HEK293 (cell line): ENCODE measurements at regions of chr11 and their contacts with region 1.

Region 1: GRCh38 chr11:76919887-76920746 is 59.4 kb downstream of the ACER3 start:
- H3K4me3 ChIP-seq: no peak overlapping the region
- H3K27ac ChIP-seq: no peak overlapping the region
- H3K4me1 ChIP-seq: no peaks in the 10 kb centered on the region
- CTCF ChIP-seq: peak; percentile 70

Region 2: DNA sequence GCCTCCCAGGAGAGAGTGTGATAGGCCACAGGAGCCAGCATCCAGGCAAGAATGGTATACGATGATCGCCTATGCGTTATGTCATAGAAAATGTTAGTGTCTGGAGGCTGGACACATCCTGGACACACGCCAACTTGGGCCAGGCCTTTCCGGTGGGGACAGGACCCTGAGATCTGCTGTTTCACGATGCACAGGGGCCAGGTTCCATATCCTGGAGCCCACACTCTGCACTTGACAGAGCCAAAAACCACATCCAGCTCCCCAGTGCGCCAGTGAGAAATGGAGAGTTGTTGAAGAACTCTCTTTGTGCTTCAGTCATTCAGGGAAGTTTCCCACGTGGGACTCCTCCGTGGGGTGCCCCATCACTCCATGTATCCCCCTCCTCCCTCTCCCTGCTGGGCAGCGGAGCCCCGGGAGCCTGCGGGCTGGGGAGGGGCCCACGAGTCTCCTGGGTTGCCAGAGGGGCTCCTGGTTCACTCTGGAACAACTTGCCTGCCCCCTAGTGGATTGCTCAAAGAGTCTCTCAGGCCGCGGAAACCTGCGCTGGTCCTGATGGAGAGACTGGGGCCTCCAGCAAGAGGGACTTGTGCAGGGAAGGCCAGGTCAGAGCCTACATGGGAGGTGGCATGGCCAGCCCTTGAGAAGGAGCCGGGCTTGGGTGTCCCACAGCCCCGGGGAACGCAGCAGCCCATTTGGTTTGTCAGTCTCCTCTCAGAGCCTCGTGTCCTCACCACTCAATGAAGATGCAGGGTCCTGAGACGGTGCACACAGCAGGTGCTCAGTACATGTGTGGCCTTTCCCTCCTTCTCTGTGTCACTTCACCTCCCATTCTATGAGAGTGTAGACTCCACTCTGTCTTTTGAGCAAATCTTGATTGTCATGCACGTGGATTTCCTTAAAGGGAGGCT is 239.3 kb before region 1 on chr11:
- CTCF ChIA-PET with region 1: no interaction called
- POLR2A ChIA-PET with region 1: no interaction called
- H3K4me3 ChIP-seq: no peak overlapping the region
- H3K27ac ChIP-seq: no peak overlapping the region
- H3K4me1 ChIP-seq: no peaks in the 10 kb centered on the region
- CTCF ChIP-seq: peak; percentile 59

Region 3: DNA sequence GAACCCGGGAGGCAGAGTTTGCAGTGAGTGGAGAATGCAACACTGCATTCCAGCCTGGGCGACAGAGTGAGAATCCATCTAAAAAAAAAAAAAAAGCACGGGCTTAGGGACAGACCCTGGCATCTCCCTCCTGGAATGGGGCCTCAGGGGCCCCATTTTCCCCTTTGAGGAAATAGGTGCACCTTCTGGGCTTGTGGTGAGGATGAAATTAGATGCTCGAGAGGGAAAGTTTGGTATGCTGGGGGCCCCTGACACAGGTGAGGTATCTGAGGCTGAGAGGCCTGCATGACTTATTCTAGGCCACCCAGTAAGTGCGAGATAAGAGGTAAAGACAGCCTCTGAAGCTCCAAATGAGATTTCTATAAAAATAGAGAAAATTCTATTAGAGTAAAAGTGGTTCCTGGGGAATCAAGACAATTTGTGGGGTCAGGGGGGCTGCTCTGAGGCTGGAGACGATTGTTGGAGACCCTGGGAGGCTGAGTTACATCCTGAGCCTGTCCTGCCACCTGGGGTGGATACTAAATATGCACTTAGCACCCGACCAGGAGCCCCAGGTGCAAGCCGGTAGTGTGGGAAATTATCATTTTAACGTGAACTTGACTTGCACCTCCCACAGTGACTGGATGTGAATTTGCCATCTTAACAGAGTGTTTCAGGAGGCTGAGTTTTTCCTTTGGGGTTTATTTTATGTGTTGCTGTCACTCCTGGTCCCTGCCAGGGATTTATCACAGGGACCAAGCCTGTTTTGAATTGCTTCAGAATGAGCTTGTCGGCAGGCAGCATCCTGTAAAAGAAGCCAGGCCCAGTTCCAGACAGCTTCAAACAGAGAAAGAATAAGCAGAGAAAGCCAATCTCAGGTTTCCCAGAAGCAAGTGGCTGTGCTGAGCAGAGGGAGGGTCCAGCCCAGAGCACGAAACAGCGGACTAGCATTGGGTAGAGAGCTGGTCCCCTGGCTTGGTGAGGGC is 185.4 kb before region 1 on chr11:
- CTCF ChIA-PET with region 1: interaction called, 90 read pairs
- POLR2A ChIA-PET with region 1: no interaction called
- H3K4me3 ChIP-seq: no peak overlapping the region
- H3K27ac ChIP-seq: no peak overlapping the region
- H3K4me1 ChIP-seq: no peaks in the 10 kb centered on the region
- CTCF ChIP-seq: no peak

Region 4: GRCh38 chr11:76814414-76814813 is 105.7 kb before region 1 on chr11:
- CTCF ChIA-PET with region 1: interaction called, 139 read pairs
- POLR2A ChIA-PET with region 1: no interaction called
- H3K4me3 ChIP-seq: no peak overlapping the region
- H3K27ac ChIP-seq: no peak overlapping the region
- H3K4me1 ChIP-seq: no peaks in the 10 kb centered on the region
- CTCF ChIP-seq: no peak

Region 5: GRCh38 chr11:76888989-76889388 is 31.1 kb before region 1 on chr11:
- CTCF ChIA-PET with region 1: interaction called, 42 read pairs
- POLR2A ChIA-PET with region 1: no interaction called
- H3K4me3 ChIP-seq: no peak overlapping the region
- H3K27ac ChIP-seq: no peak overlapping the region
- H3K4me1 ChIP-seq: peaks cover 7% of the 10 kb centered on the region; the same call in 1 of the 2 replicates
- CTCF ChIP-seq: no peak

Region 6: GRCh38 chr11:76955459-76956114 is 35.5 kb after region 1 on chr11:
- CTCF ChIA-PET with region 1: interaction called, 11 read pairs
- POLR2A ChIA-PET with region 1: no interaction called
- H3K4me3 ChIP-seq: no peak overlapping the region
- H3K27ac ChIP-seq: no peak overlapping the region
- H3K4me1 ChIP-seq: no peaks in the 10 kb centered on the region
- CTCF ChIP-seq: no peak

Region 7: DNA sequence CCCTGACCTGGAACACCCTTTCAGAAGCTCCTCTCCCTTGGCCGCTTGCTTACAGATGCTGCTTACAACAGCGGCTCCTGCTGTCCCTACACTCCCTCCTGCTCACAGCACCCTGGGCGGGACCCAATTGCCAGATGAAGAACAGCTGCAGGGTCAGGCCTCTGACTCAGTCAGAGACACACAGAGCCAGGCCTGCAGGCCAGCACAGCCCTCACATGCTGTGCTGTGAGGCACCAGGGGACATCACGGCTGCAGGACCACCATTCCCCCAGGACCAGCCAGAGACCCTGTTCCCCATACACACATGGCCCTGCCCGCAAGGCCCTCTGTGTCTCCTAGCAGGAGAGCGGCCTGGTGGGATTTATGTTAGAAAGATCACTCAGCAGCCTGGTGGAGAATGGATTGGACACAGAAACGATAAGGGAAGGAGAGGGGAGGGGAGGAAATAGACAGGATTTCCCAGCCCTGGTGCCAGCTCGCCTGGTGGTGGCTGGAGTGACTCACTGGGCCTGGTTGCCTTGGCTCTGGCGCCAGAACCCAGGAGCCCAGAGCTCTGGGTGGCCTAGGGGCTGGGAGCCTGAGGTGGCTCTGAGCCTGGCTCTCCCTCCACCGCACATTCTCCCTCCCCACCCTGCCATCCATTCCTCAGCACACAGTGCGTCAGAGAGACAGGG is 153.3 kb after region 1 on chr11:
- CTCF ChIA-PET with region 1: no interaction called
- POLR2A ChIA-PET with region 1: no interaction called
- H3K4me3 ChIP-seq: no peak overlapping the region
- H3K27ac ChIP-seq: no peak overlapping the region
- H3K4me1 ChIP-seq: no peaks in the 10 kb centered on the region
- CTCF ChIP-seq: no peak

Region 8: DNA sequence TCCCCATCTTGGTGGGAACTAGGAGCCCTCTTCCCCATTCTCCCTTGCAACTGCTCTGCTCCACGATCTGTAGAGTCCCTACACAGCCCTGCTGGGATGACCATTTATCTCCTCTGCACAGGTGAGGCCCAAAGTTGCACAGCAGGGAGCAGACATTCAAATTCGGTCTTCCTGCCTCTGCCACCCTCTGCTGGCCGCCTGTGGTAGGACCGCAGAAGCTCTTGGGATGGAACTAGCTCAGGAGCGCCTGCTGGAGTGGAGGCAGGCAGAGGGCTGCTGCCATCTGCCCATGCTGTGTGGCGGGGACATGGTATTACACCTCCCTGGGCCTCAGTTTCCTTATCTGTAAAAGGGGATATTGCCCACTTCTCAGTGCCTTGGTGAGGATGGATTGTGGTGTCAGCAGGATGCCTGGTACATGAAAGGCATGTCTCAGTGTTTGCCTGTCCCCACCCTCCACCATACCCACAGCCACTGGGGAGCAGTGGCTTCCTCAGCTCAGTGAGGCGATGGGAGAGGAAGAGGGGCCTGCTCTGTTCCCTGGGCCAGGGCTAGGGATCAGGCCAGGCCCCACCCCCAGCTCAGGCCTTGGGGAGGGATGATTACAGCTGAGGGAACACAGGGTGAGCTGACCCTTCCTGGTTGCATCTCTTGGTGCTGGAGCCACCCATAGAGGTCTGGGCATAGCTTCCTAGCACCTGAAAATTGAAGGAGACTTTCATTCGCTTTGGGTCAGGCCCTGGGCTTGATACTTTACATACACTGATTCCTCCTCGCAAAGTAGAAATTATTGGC is 171.2 kb after region 1 on chr11:
- CTCF ChIA-PET with region 1: interaction called, 41 read pairs
- POLR2A ChIA-PET with region 1: no interaction called
- H3K4me3 ChIP-seq: no peak overlapping the region
- H3K27ac ChIP-seq: no peak overlapping the region
- H3K4me1 ChIP-seq: no peaks in the 10 kb centered on the region
- CTCF ChIP-seq: peak; percentile 74; the same call in 1 of the 2 replicates

Region 9: DNA sequence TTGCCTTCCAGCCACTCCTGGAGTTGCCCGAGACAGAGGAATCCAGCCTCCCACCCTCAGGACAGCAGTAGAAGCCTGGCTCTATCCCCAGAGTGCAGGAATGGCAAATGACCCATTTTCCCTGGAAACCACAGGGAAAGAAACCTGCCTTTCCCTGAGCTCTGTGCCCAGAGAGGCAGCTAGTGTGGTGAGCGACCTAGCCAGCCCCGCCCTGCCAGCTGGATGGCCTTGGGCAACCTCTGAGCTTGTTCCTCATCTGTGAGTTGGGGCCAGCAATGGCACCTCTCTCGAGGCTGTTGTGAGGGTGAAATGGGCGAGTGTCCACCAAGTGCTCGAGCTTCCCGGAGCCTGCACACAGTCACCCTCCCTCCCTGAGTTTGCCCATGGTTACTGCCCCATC is 186.2 kb after region 1 on chr11:
- CTCF ChIA-PET with region 1: no interaction called
- POLR2A ChIA-PET with region 1: no interaction called
- H3K4me3 ChIP-seq: no peak overlapping the region
- H3K27ac ChIP-seq: no peak overlapping the region
- H3K4me1 ChIP-seq: no peaks in the 10 kb centered on the region
- CTCF ChIP-seq: no peak

Region 10: GRCh38 chr11:77129841-77130756 is 210.0 kb after region 1 on chr11:
- CTCF ChIA-PET with region 1: no interaction called
- POLR2A ChIA-PET with region 1: no interaction called
- H3K4me3 ChIP-seq: no peak overlapping the region
- H3K27ac ChIP-seq: no peak overlapping the region
- H3K4me1 ChIP-seq: no peaks in the 10 kb centered on the region; the same call in 1 of the 2 replicates
- CTCF ChIP-seq: no peak